ENCODE measurements at regions of chr9 and their contacts with region 1.

Region 1: GRCh38 chr9:4762108-4762885 is 21.3 kb upstream of the AK3 start:
- DNase-seq: peak; percentile 91
- H3K4me3 Mint-ChIP-seq: peak overlapping the region; percentile 34
- H3K27ac Mint-ChIP-seq: peak overlapping the region; percentile 6
- H3K4me1 Mint-ChIP-seq: peaks cover 22% of the 10 kb centered on the region
- H3K27me3 Mint-ChIP-seq: peaks cover 34% of the 10 kb centered on the region

Region 2: DNA sequence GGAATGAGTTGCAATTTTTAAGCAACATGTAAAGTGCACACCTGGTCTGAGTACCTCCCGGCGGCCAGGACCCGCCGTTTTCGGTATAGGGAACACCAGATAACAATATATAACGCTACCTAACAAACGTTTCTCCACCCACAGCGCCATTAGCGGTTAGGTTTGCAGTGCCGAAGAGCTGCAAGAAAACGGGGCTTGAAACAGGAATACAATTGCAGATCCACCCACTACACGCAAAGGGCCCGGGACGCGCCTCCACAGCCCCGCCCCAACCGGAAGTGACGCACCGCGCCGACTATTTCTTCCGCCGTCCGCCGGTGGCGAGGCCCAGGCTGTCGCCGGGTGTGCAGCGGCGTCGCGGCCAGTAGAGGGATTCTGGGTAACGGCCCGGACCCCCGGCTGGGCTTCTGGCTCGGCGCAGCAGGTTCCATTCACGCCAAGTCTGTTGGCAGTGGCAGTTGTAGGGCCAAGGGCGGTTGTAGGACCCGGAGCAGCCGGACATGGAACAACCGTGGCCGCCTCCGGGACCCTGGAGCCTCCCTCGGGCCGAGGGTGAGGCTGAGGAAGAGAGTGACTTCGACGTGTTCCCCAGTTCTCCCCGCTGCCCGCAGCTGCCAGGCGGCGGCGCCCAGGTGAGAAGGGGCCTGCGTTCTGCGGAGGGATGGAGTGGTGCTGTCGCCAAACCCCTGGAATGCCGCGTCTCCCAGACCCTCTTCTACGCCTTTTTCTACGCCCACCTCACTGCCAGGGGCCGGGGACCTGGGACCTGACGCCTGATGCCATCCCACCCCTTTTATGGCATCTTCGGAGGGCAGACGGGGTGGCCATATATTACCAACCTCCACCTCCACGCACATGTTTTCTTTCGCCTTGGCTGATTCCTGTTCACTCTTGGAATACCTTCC is 82.8 kb before region 1 on chr9 and contains the start of gene CDC37L1:
- CTCF ChIA-PET with region 1: no interaction called
- DNase-seq: peak; percentile 99
- H3K4me3 Mint-ChIP-seq: no peak within 1 kb of the TSS
- H3K27ac Mint-ChIP-seq: no peak within 1 kb of the TSS
- H3K4me1 Mint-ChIP-seq: peaks cover 3% of the 10 kb centered on the region
- H3K27me3 Mint-ChIP-seq: peaks cover 3% of the 10 kb centered on the region

Region 3: GRCh38 chr9:4750023-4750673 is 12.1 kb before region 1 on chr9:
- CTCF ChIA-PET with region 1: interaction called, 17 read pairs
- DNase-seq: no peak
- H3K4me3 Mint-ChIP-seq: no peak overlapping the region
- H3K27ac Mint-ChIP-seq: no peak overlapping the region
- H3K4me1 Mint-ChIP-seq: peaks cover 2% of the 10 kb centered on the region
- H3K27me3 Mint-ChIP-seq: peaks cover 18% of the 10 kb centered on the region

Region 4: DNA sequence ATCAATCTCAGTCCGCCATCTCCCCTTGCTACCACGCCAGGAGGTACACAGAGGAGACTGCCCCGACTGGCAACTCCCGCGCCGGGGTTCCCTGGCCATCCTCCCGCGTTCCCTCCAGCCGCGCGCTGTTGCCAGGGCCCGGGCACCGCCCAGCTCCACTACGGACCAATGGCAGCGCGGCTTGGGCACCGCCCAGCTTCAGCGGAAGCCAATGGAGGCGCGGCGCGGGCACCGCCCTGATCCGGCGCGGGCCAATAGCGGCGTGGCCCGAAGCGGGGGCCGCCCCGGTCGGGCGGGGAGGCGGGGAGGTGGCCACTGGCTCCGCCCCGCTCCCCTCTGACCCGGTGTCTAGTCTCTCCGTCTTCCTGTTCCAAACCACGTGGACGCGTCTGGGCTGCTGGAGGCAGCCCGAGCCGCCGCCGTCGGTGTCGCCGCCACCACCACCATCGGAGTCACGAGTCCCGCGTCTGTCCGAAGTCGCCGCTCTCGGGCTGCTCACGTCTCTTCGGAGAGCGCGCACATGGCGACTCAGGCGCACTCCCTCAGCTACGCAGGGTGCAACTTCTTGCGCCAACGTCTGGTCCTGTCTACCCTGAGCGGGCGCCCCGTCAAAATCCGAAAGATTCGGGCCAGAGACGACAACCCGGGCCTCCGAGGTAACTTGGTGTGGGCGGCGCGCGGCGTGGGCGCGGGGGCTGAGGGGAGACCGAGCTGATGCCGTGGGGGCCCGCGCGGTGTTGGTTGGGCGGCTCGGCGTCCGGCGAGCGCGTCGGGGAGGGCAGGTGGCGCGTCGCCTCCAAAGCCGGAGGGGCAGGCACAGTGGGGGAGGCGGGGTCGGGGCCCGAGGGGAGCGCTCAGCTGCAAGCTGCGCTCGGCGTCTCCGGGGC is 30.5 kb after region 1 on chr9 and contains the start of gene RCL1:
- CTCF ChIA-PET with region 1: interaction called, 12 read pairs
- DNase-seq: peak; percentile 97
- H3K4me3 Mint-ChIP-seq: peak within 1 kb of the TSS; percentile 89
- H3K27ac Mint-ChIP-seq: peak within 1 kb of the TSS; percentile 92
- H3K4me1 Mint-ChIP-seq: peaks cover 46% of the 10 kb centered on the region
- H3K27me3 Mint-ChIP-seq: peaks cover 8% of the 10 kb centered on the region

Region 5: GRCh38 chr9:4987961-4988421 is 225.7 kb after region 1 on chr9:
- CTCF ChIA-PET with region 1: interaction called, 24 read pairs
- DNase-seq: peak; percentile 67
- H3K4me3 Mint-ChIP-seq: no peak overlapping the region
- H3K27ac Mint-ChIP-seq: no peak overlapping the region
- H3K4me1 Mint-ChIP-seq: peaks cover 38% of the 10 kb centered on the region
- H3K27me3 Mint-ChIP-seq: no peaks in the 10 kb centered on the region